Natural killer cell (primary cell): ENCODE measurements at regions of chr14 and their contacts with region 1.

Region 1: DNA sequence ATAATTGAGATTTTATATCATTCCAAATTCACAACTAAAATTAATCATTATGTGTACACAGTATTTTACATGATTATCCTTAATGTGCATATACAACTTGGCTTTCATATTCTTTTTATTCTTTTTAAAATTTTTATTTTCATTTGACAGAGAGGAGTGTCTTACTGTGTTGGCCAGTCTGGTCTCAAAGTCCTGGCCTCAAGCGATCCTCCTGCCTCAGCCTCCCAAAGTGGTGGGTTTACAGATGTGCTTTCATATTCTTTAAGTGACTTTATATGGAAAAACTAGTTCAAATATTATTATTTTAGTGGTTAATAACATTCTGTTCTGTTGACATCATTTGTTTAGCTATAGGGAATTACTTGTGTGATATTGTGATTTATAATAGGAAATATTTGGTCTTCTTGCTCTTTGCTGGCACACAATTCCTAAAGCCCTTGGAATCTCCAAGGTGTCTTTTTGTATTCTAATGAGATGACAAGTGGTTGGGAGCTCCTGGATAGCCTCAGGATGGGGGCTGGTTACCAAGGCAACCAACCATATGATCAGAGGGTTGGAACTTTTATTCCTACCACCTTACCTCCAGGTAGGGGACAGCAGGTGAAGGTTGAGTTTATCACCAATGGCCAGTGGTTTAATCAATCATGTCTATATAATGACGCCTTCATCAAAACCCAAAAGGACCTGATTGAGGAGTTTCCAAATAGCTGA is 16.0 kb upstream of the ZNF410 start:
- DNase-seq: no peak
- ATAC-seq: no peak
- H3K4me3 ChIP-seq: no peak overlapping the region
- H3K4me3 Mint-ChIP-seq: no peak overlapping the region
- H3K27ac ChIP-seq: no peak overlapping the region
- H3K27ac Mint-ChIP-seq: no peak overlapping the region
- H3K4me1 ChIP-seq: no peaks in the 10 kb centered on the region
- H3K4me1 Mint-ChIP-seq: no peaks in the 10 kb centered on the region
- H3K27me3 ChIP-seq: no peaks in the 10 kb centered on the region
- H3K27me3 Mint-ChIP-seq: no peaks in the 10 kb centered on the region
- CTCF ChIP-seq: no peak

Region 2: DNA sequence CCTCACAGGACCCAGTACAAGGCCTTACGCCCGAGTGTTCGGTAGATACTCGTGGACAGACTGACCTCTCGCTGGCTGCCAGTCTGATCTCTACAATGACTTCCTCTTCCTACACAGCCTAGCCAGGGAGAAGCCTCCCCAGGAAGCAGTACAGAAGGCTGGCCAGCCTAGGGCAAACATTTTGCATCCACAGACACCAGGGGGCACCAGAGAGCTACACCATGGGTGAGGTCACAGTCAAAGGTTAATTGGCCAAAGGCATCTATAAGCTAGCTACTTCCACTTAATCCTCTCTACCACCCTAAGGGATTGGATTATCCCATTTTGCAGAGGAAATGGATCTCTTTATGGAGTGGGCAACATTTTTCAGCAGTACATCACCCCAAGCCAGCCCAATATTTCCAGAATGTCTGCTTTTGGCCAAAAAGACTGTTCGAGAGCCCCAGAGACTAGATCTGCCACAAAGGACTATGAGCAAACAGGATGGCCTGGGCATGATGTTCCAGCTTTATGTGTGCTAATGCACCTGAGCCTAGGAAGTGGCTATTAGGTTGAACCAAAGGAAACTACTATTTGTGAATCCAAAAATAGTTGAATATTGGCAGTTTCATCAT is 141.9 kb before region 1 on chr14:
- intact Hi-C with region 1: loop called (anchors 1 kb)
- DNase-seq: peak; percentile 83 to 92
- ATAC-seq: peak; percentile 89 to 97 (median 90)
- H3K4me3 ChIP-seq: no peak overlapping the region
- H3K4me3 Mint-ChIP-seq: no peak overlapping the region
- H3K27ac ChIP-seq: no peak overlapping the region
- H3K27ac Mint-ChIP-seq: peak overlapping the region; percentile 67 to 74
- H3K4me1 ChIP-seq: peaks cover 7% of the 10 kb centered on the region
- H3K4me1 Mint-ChIP-seq: peaks cover 16 to 24% of the 10 kb centered on the region in 2 donors
- H3K27me3 ChIP-seq: no peaks in the 10 kb centered on the region
- H3K27me3 Mint-ChIP-seq: no peaks in the 10 kb centered on the region
- CTCF ChIP-seq: peak; percentile 92

Region 3: DNA sequence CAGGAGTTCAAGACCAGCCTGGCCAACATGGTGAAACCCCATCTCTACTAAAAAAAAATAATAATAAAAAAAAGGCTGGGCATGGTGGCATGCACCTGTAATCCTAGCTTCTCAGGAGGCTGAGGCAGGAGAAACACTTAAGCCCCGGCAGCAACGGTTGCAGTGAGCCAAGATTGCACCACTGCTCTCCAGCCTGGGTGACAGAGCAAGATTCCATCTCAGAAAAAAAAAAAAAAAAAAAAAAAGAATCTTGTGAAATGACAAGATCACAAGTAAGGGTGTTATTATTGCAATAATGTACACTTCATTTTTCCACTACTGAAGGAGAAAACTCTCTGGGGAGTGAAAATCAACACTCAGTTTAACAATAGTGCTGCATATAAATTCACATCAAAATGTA is 27.8 kb before region 1 on chr14:
- intact Hi-C with region 1: no loop called
- DNase-seq: no peak
- ATAC-seq: no peak
- H3K4me3 ChIP-seq: no peak overlapping the region
- H3K4me3 Mint-ChIP-seq: no peak overlapping the region
- H3K27ac ChIP-seq: no peak overlapping the region
- H3K27ac Mint-ChIP-seq: no peak overlapping the region
- H3K4me1 ChIP-seq: no peaks in the 10 kb centered on the region
- H3K4me1 Mint-ChIP-seq: no peaks in the 10 kb centered on the region
- H3K27me3 ChIP-seq: no peaks in the 10 kb centered on the region
- H3K27me3 Mint-ChIP-seq: peaks cover 0 to 8% of the 10 kb centered on the region in 2 donors
- CTCF ChIP-seq: no peak